Activated naive CD4-positive, alpha-beta T cell treated with anti-CD3 and anti-CD28 coated beads for 36 hours (primary cell): ENCODE measurements at regions of chr20 and their contacts with region 1.

Region 1: GRCh38 chr20:2523919-2524708 is 12.3 kb upstream of the TMC2 start:
- DNase-seq: peak; percentile 94
- H3K4me3 Mint-ChIP-seq: peak overlapping the region; percentile 86
- H3K27ac Mint-ChIP-seq: no peak overlapping the region
- H3K4me1 Mint-ChIP-seq: peaks cover 5% of the 10 kb centered on the region
- H3K27me3 Mint-ChIP-seq: no peaks in the 10 kb centered on the region

Region 2: GRCh38 chr20:1576641-1577040 is 947.5 kb before region 1 on chr20:
- CTCF ChIA-PET with region 1: no interaction called
- intact Hi-C with region 1: no loop called
- DNase-seq: no peak
- H3K4me3 Mint-ChIP-seq: no peak overlapping the region
- H3K27ac Mint-ChIP-seq: no peak overlapping the region
- H3K4me1 Mint-ChIP-seq: peaks cover 2% of the 10 kb centered on the region
- H3K27me3 Mint-ChIP-seq: no peaks in the 10 kb centered on the region

Region 3: DNA sequence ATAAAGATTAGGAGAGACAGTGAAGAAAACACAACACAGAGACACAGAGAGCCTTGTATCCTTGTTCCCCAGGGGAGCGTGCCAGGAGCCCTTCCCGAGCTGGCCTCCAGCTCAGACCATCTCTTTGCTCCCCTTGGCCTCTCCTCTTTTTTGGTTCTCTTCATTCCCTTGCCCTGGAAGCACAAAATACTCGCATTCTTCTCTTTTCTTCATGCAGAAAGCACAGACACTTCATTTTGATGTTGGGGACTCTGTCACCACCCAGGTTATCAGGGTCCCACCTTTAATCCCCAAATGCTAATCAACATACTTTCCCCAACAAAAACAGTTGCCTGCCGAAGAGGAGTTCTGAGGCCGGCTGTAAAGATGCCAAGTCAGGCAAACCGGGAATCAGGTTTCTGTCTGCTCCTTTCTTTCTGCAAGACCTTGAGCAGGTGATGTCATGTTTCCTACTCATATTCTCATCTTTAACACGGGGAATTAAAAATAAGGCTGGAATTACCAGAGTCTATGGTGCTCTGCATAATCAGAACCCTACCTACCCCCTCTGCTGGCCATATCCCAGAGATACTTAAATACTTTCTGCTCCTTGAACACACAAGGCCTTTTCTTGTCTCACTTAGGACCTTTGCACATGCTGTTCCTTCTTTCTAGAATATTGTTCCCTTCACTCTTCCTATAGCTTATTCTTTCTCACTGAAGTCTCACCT is 121.7 kb before region 1 on chr20:
- CTCF ChIA-PET with region 1: no interaction called
- intact Hi-C with region 1: no loop called
- DNase-seq: no peak
- H3K4me3 Mint-ChIP-seq: no peak overlapping the region
- H3K27ac Mint-ChIP-seq: no peak overlapping the region
- H3K4me1 Mint-ChIP-seq: no peaks in the 10 kb centered on the region
- H3K27me3 Mint-ChIP-seq: peaks cover 5% of the 10 kb centered on the region

Region 4: GRCh38 chr20:2451939-2452732 is 72.0 kb before region 1 on chr20:
- CTCF ChIA-PET with region 1: interaction called, 13 read pairs
- intact Hi-C with region 1: no loop called
- DNase-seq: peak; percentile 85
- H3K4me3 Mint-ChIP-seq: no peak overlapping the region
- H3K27ac Mint-ChIP-seq: no peak overlapping the region
- H3K4me1 Mint-ChIP-seq: peaks cover 37% of the 10 kb centered on the region
- H3K27me3 Mint-ChIP-seq: no peaks in the 10 kb centered on the region

Region 5: GRCh38 chr20:2508631-2509467 is 15.3 kb before region 1 on chr20 and contains the start of gene ZNF343:
- CTCF ChIA-PET with region 1: interaction called, 74 read pairs
- intact Hi-C with region 1: loop called (anchors 1 kb)
- DNase-seq: peak; percentile 85
- H3K4me3 Mint-ChIP-seq: peak within 1 kb of the TSS; percentile 99
- H3K27ac Mint-ChIP-seq: peak within 1 kb of the TSS; percentile 90
- H3K4me1 Mint-ChIP-seq: peaks cover 21% of the 10 kb centered on the region
- H3K27me3 Mint-ChIP-seq: peaks cover 3% of the 10 kb centered on the region
- total RNA-seq, gene ZNF343: 5.3 to 5.7 TPM

Region 6: GRCh38 chr20:2538931-2539720 is 15.0 kb after region 1 on chr20:
- CTCF ChIA-PET with region 1: interaction called, 12 read pairs
- intact Hi-C with region 1: no loop called
- DNase-seq: no peak
- H3K4me3 Mint-ChIP-seq: no peak overlapping the region
- H3K27ac Mint-ChIP-seq: no peak overlapping the region
- H3K4me1 Mint-ChIP-seq: no peaks in the 10 kb centered on the region
- H3K27me3 Mint-ChIP-seq: peaks cover 18% of the 10 kb centered on the region

Region 7: DNA sequence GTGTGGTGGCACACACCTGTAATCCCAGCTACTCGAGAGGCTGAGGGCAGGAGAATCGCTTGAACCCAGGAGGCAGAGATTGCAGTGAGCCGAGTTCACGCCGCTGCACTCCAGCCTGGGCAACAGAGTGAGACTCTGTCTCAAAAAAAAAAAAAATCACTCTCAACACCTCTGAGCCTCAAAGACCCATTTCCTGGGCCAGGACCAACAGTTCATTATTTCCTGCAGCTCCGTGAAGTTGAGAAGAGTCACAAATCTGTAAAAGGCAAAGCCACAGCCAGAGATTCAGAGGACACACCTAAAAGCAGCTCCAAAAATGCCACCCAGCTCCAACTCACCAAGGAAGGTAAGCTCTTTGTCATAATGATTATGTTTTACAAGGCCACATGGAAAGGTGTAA is 113.1 kb after region 1 on chr20:
- CTCF ChIA-PET with region 1: interaction called, 10 read pairs
- intact Hi-C with region 1: no loop called
- DNase-seq: no peak
- H3K4me3 Mint-ChIP-seq: no peak overlapping the region
- H3K27ac Mint-ChIP-seq: no peak overlapping the region
- H3K4me1 Mint-ChIP-seq: peaks cover 3% of the 10 kb centered on the region
- H3K27me3 Mint-ChIP-seq: no peaks in the 10 kb centered on the region

Region 8: DNA sequence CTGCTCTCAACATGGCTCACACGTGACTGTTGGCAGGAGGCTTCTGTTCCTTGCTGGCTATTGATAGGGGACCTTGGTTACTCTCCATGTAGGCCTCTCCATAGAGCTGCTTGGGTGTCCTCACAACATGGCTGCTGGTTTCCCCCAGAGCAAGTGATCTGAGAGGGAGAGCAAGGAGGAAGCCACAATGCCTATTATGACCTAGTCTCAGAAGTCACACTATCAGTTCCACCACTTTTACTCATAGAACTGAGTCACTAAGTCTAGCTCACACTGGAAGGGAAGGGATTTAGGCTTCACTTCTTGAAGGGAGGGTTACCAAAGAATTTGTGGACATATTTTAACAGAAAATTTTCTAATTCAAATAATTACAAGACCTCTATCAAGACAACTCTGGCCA is 119.6 kb after region 1 on chr20:
- CTCF ChIA-PET with region 1: interaction called, 20 read pairs
- intact Hi-C with region 1: loop called (anchors 1 kb)
- DNase-seq: no peak
- H3K4me3 Mint-ChIP-seq: no peak overlapping the region
- H3K27ac Mint-ChIP-seq: no peak overlapping the region
- H3K4me1 Mint-ChIP-seq: peaks cover 3% of the 10 kb centered on the region
- H3K27me3 Mint-ChIP-seq: no peaks in the 10 kb centered on the region

Region 9: DNA sequence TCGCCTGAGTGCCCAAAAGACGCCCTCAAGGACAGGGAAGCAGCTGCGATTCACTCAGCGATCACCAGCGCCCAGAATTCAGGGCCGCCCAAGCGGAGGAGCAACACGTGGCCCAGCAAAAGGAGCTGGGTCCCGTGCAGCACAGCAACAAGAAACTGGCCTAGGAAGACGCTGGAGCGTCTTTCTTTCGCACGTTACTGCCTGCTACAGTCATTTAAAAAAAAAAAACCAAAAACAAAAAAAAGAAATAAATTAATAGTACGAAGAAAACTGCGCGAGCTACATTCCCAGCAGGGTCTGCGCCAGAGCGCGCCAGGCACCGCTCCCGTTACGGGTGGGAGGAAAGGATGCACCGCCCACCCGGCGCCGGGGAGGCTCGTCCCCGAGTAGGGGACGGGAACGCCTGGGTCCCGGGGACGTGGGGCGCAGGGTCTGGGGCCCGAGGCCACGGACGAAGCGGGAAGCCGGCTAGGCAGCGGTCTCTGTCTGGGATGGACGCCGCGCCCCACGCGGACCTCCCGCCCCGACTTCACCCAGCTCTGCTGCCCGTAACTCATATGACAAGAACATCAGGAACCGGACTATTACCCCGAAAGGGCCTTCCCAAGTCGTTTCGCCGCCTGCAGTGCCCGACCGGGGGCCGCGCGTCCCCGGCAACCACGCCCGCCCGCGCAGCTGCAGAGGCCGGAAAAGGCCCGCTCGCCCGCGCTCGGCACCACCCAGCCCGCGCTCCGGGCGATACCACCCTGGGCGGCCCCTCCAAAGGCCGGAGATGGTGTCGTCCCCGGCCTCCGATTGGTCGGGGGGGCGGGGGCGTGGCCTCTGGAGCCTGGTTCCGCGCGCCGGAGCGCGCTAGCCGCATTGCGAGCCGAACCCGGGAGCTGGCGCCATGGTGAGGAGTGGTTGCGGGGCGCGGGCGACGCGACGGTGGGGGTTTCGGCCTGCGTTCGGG is 127.9 kb after region 1 on chr20 and contains the start of gene NOP56:
- CTCF ChIA-PET with region 1: interaction called, 20 read pairs
- intact Hi-C with region 1: loop called (anchors 1 kb)
- DNase-seq: peak; percentile 92
- H3K4me3 Mint-ChIP-seq: peak within 1 kb of the TSS; percentile 90
- H3K27ac Mint-ChIP-seq: peak within 1 kb of the TSS; percentile 90
- H3K4me1 Mint-ChIP-seq: peaks cover 48% of the 10 kb centered on the region
- H3K27me3 Mint-ChIP-seq: no peaks in the 10 kb centered on the region
- total RNA-seq, gene NOP56: 385 to 405 TPM